Activated CD4-positive, alpha-beta memory T cell treated with anti-CD3 and anti-CD28 coated beads for 36 hours (primary cell): ENCODE measurements at regions of chr2 and their contacts with region 1.

Region 1: GRCh38 chr2:241217320-241218031 is 29.0 kb downstream of the ANO7 start:
- DNase-seq: peak; percentile 45
- H3K4me3 Mint-ChIP-seq: peak overlapping the region; percentile 60
- H3K27ac Mint-ChIP-seq: no peak overlapping the region
- H3K4me1 Mint-ChIP-seq: peaks cover 9% of the 10 kb centered on the region
- H3K27me3 Mint-ChIP-seq: no peaks in the 10 kb centered on the region

Region 2: GRCh38 chr2:240832205-240832727 is 385.2 kb before region 1 on chr2:
- CTCF ChIA-PET with region 1: no interaction called
- POLR2A ChIA-PET with region 1: no interaction called
- intact Hi-C with region 1: loop called (anchors 10 kb)
- DNase-seq: peak; percentile 97
- H3K4me3 Mint-ChIP-seq: peak overlapping the region; percentile 68
- H3K27ac Mint-ChIP-seq: no peak overlapping the region
- H3K4me1 Mint-ChIP-seq: no peaks in the 10 kb centered on the region
- H3K27me3 Mint-ChIP-seq: peaks cover 15% of the 10 kb centered on the region

Region 3: DNA sequence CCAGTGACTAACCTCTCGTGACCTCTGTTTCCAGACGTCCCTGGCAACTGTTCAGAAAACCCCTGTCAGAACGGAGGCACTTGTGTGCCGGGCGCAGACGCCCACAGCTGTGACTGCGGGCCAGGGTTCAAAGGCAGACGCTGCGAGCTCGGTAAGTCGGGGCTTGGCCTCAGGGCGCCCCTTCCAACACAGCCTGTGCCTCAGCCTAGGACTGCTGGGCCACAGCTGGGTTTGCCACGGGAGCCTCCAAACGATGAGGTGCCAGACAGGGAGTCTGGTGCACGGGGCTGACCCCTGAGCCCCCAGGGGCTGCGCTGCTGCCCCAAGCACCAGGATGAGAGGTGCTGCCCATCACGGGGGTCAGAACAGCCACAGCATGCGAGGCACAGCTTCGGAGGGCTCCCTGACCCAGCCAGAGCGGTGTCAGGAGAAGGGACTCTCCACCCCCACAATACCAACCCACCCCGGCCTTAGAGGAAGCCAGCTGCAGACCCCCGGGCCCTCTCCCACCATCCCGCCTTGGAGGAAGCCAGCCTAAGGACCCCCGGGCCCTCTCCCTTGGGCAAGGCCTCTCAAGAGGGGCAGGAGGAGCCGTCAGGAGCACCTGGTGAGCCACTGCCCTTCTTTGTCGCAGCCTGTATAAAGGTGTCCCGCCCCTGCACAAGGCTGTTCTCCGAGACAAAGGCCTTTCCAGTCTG is 135.7 kb before region 1 on chr2:
- CTCF ChIA-PET with region 1: interaction called, 12 read pairs
- POLR2A ChIA-PET with region 1: interaction called, 3 read pairs
- intact Hi-C with region 1: loop called (anchors 2 kb)
- DNase-seq: no peak
- H3K4me3 Mint-ChIP-seq: no peak overlapping the region
- H3K27ac Mint-ChIP-seq: no peak overlapping the region
- H3K4me1 Mint-ChIP-seq: peaks cover 2% of the 10 kb centered on the region
- H3K27me3 Mint-ChIP-seq: no peaks in the 10 kb centered on the region

Region 4: DNA sequence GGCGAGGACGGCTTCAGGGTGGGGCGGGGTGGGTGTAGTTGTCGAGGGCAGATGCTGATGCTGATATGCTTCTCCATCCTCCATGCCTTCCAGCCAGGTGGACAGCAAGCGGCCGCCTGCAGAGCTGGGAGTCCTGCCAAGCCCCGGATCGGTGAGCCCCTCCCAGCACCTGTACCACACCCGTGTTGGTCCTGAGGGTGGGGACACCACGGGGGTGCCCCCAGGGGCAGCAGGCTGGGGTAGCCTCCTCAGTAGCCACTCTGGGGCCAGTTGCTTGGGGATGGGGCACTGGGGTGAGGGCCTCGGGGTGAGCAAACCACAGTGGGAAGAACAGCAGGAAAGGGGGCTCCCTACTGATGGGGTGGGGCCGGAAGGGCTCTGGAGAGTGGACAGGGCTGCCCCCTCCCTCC is 26.4 kb before region 1 on chr2:
- CTCF ChIA-PET with region 1: no interaction called
- POLR2A ChIA-PET with region 1: no interaction called
- intact Hi-C with region 1: no loop called
- DNase-seq: no peak
- H3K4me3 Mint-ChIP-seq: no peak overlapping the region
- H3K27ac Mint-ChIP-seq: no peak overlapping the region
- H3K4me1 Mint-ChIP-seq: no peaks in the 10 kb centered on the region
- H3K27me3 Mint-ChIP-seq: no peaks in the 10 kb centered on the region